A549 (cell line): ENCODE measurements at regions of chr10 and their contacts with region 1.

Region 1: GRCh38 chr10:28663576-28664313 is 13.6 kb upstream of the BAMBI start:
- DNase-seq: peak; percentile 79 to 86
- ATAC-seq: peak; percentile 87 to 92
- H3K4me3 ChIP-seq: no peak overlapping the region
- H3K27ac ChIP-seq: peak overlapping the region; percentile 47 to 67; a peak in 5 of 6 replicates
- H3K4me1 ChIP-seq: peaks cover 28% of the 10 kb centered on the region
- CTCF ChIP-seq: peak; percentile 97
- EP300 ChIP-seq: no peak
- POLR2A ChIP-seq: no peak
- RAD21 ChIP-seq: peak; percentile 99

Region 2: GRCh38 chr10:28558923-28559508 is 104.7 kb before region 1 on chr10:
- CTCF ChIA-PET with region 1: no interaction called
- POLR2A ChIA-PET with region 1: no interaction called
- DNase-seq: no peak
- ATAC-seq: no peak
- H3K4me3 ChIP-seq: no peak overlapping the region
- H3K27ac ChIP-seq: no peak overlapping the region
- H3K4me1 ChIP-seq: peaks cover 1% of the 10 kb centered on the region; the same call in 1 of the 3 replicates
- CTCF ChIP-seq: no peak
- EP300 ChIP-seq: no peak
- POLR2A ChIP-seq: no peak
- RAD21 ChIP-seq: no peak

Region 3: DNA sequence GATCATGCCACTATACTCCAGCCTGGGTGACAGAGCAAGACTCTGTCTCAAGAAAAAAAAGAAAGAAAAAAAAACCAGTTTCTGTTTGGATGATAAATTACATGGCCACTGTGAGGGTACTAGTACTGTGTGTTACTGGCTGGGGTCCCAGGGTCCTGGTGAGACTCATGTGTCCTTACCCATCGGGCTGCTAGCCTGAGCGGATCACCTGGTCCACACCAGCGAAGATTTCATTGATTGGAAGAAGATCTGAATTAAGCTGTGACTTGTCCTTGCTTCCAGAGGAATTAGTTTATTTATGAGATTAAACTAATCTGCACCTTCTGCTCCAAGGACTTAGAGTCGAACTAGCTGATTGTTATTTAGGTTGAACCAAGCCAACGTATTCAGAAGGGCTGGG is 26.4 kb before region 1 on chr10:
- CTCF ChIA-PET with region 1: interaction called, 14 read pairs
- POLR2A ChIA-PET with region 1: no interaction called
- DNase-seq: no peak
- ATAC-seq: no peak
- H3K4me3 ChIP-seq: no peak overlapping the region
- H3K27ac ChIP-seq: no peak overlapping the region
- H3K4me1 ChIP-seq: peaks cover 12% of the 10 kb centered on the region; the same call in 2 of the 3 replicates
- CTCF ChIP-seq: no peak
- EP300 ChIP-seq: no peak
- POLR2A ChIP-seq: no peak
- RAD21 ChIP-seq: no peak

Region 4: GRCh38 chr10:28676968-28677887 is 13.5 kb after region 1 on chr10 and contains the start of gene BAMBI:
- CTCF ChIA-PET with region 1: interaction called, 15 read pairs
- POLR2A ChIA-PET with region 1: interaction called, 6 read pairs
- DNase-seq: peak; percentile 49 to 90
- ATAC-seq: peak; percentile 94 to 97
- H3K4me3 ChIP-seq: peak within 1 kb of the TSS; percentile 99
- H3K27ac ChIP-seq: peak within 1 kb of the TSS; percentile 94
- H3K4me1 ChIP-seq: peaks cover 27% of the 10 kb centered on the region
- CTCF ChIP-seq: peak; percentile 87
- EP300 ChIP-seq: no peak
- POLR2A ChIP-seq: peak; percentile 99
- RAD21 ChIP-seq: peak; percentile 57 to 95
- polyA plus RNA-seq, gene BAMBI: 40.5 and 60.8 TPM in 2 replicates

Region 5: GRCh38 chr10:28991326-28992270 is 327.9 kb after region 1 on chr10:
- CTCF ChIA-PET with region 1: interaction called, 57 read pairs
- POLR2A ChIA-PET with region 1: interaction called, 9 read pairs
- DNase-seq: peak; percentile 60 to 88
- ATAC-seq: peak; percentile 89 to 92
- H3K4me3 ChIP-seq: no peak overlapping the region
- H3K27ac ChIP-seq: peak overlapping the region; percentile 65 to 80
- H3K4me1 ChIP-seq: peaks cover 24% of the 10 kb centered on the region
- CTCF ChIP-seq: peak; percentile 92
- EP300 ChIP-seq: peak in 1 of 2 experiments; percentile 35; a peak in 1 of 5 replicates
- POLR2A ChIP-seq: no peak
- RAD21 ChIP-seq: peak; percentile 98

Region 6: DNA sequence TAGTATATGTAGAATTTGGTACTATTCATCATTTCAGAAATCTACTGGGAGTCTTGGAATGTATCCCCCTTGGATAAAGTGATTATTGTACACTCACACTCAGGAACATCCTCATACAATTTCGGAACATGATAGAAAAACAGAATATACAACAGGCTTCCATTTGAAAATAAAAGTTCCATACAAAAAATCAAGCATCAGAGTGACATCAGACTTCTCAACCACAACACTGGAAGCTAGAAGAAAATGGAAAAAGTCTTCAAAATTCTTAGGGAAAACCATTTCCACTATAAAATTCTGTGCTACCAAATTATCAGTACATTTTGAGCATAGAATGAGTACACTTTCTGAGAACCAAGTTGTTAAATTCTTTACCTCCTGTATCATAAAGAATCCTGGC is 633.9 kb after region 1 on chr10:
- CTCF ChIA-PET with region 1: interaction called, 42 read pairs
- POLR2A ChIA-PET with region 1: no interaction called
- DNase-seq: peak in 1 of 2 experiments; percentile 29
- ATAC-seq: no peak
- H3K4me3 ChIP-seq: no peak overlapping the region
- H3K27ac ChIP-seq: no peak overlapping the region
- H3K4me1 ChIP-seq: no peaks in the 10 kb centered on the region
- CTCF ChIP-seq: no peak
- EP300 ChIP-seq: no peak
- POLR2A ChIP-seq: no peak
- RAD21 ChIP-seq: no peak

Region 7: GRCh38 chr10:29392376-29393021 is 728.8 kb after region 1 on chr10:
- CTCF ChIA-PET with region 1: interaction called, 23 read pairs
- POLR2A ChIA-PET with region 1: no interaction called
- DNase-seq: peak; percentile 47 to 54
- ATAC-seq: peak; percentile 72 to 88; a peak in 4 of 6 replicates
- H3K4me3 ChIP-seq: no peak overlapping the region
- H3K27ac ChIP-seq: no peak overlapping the region
- H3K4me1 ChIP-seq: no peaks in the 10 kb centered on the region
- CTCF ChIP-seq: peak; percentile 81
- EP300 ChIP-seq: no peak
- POLR2A ChIP-seq: no peak
- RAD21 ChIP-seq: peak; percentile 72 to 77